Psoas muscle (tissue), 8 donors: ENCODE measurements at regions of chr11 and their contacts with region 1.

Region 1: DNA sequence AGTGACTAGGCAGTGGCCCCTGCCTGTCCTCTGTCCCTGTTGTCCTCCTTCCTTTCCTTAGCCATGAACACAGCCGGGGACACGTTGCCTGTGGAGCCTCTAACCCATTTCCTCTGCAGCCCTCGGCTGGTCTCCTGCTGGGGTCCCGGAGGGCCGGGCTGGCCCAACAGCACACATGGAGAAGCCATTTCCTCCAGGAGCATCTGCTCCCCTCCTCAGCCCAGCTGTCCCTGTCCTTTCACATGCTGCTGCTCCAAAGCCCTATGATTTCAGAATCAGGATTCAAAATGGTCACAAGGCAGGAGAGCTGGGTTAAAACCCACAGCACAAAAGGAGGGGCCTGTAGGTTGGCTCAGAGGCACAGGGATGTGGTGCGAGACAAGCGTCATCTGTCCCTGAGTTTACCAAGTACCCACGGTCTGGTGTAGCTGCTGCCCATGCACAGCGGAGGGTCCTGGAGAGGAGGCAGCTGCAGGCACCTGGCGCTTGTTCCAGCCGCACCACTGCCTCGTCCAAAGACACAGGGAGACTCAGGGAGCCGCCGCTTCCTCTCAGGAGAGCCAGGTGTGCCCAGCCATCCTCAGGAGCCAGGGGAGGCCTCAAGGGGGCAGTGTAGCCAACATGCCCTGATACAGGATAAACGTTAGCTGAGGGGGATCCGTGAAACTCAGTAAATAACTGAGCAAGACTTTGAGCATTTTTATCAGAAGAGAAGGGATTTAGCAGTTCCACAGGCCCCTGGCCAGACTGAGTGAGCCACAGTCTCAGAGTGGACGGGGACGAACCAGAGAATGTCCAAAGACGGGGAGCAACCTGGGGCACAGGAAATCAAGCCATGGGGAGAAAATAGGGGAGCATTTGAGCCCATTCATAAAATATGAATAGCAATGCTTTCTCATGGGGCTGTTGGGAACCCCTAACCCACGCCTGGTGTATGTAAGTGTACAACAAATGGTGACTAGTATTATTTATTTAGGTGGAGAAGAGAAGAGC is 3.9 kb upstream of the VSIG10L2 start:
- DNase-seq: peak; percentile 54 to 74
- ATAC-seq: peak; percentile 72 to 92 (median 78)
- H3K4me3 ChIP-seq: no peak overlapping the region
- H3K27ac ChIP-seq: no peak overlapping the region
- H3K4me1 ChIP-seq: no peaks in the 10 kb centered on the region
- H3K27me3 ChIP-seq: no peaks in the 10 kb centered on the region
- CTCF ChIP-seq: peak; percentile 67

Region 2: DNA sequence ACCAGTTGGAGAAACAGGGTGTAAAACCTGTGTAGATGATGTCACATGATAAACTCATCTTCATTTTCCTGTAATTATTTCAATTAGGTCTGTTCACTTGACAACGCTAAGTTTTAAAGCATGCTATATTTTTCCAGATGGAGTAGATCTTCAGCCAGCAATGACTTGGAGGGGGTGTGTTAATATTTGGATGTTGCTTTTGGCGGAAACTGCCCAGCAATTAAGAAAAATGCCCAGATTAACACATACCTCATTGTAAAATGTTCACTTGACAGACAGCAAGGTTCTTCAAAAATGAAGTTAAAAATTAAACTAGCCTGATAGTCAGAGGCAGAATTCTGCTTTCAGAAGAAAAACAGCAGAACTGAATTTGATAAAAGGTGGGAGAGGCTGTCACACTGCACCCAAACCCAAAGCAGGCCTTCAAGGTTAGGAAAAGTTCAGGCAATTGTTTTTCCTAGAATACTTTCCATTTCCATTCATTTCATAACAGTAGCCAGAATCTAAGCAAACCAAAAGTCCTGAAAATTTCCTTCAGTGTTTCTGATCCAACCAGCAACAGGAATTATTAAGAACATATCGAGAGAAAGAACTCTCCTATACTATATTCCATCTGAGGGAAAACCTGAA is 37.0 kb after region 1 on chr11:
- intact Hi-C with region 1: loop called in 1 of 2 experiments (anchors 1 kb)
- DNase-seq: no peak
- ATAC-seq: no peak
- H3K4me3 ChIP-seq: no peak overlapping the region
- H3K27ac ChIP-seq: no peak overlapping the region
- H3K4me1 ChIP-seq: no peaks in the 10 kb centered on the region
- H3K27me3 ChIP-seq: no peaks in the 10 kb centered on the region
- CTCF ChIP-seq: no peak

Region 3: DNA sequence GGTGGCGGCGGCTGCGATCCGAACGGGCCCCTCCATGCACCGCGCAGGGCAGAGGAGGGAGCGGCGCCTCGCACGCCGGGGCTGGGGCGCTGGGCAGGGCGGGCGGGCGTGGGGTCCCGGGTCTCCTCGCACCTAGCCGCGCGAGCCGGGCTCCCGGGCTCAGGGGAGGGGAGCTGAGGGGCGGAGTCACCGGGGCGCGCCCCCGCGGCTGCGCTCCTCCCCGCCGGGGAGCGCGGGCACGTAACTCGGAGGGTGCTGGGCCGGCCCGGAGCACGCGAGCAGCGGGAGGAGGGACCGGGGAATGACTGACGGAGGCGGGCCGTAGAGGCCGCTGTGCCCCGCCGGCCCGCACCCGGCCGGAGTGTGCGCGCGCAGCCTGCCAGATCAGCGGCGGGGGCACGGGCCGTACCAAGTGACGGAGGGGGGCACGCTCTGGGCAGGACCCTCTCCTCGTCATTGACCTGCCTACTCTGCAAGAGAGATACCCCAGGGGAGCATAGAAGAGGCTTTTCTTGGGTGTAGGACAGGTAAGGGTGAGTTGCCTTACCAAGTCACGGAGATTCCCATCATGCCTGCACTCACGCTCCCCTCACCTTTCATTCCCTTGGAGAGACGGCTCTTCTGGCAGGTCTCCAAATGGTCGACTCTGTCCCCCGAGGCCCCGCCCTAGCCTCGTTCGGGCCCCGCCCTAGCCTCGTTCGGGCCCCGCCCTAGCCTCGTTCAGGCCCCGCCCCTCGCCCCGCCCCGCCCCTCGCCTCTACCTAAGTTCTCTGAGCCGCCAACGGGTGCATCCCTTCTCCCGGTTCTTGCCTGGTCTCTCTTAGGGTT is 121.0 kb after region 1 on chr11 and contains the start of gene CDON:
- intact Hi-C with region 1: loop called in 1 of 2 experiments (anchors 10 kb)
- DNase-seq: peak; percentile 93 to 96
- ATAC-seq: peak; percentile 99
- H3K4me3 ChIP-seq: peak within 1 kb of the TSS; percentile 79
- H3K27ac ChIP-seq: peak within 1 kb of the TSS; percentile 80
- H3K4me1 ChIP-seq: peaks cover 12% of the 10 kb centered on the region
- H3K27me3 ChIP-seq: peaks cover 0 to 16% (median 0%) of the 10 kb centered on the region in 3 donors
- CTCF ChIP-seq: no peak
- total RNA-seq, gene CDON: 1.3 to 5.6 (median 1.5) TPM

Region 4: GRCh38 chr11:126115816-126116331 is 174.0 kb after region 1 on chr11:
- intact Hi-C with region 1: loop called in 1 of 2 experiments (anchors 10 kb)
- DNase-seq: peak; percentile 61 to 71
- ATAC-seq: peak; percentile 62 to 73 (median 68)
- H3K4me3 ChIP-seq: no peak overlapping the region
- H3K27ac ChIP-seq: peak overlapping the region; percentile 65
- H3K4me1 ChIP-seq: peaks cover 32% of the 10 kb centered on the region
- H3K27me3 ChIP-seq: peaks cover 0 to 1% (median 0%) of the 10 kb centered on the region in 3 donors
- CTCF ChIP-seq: peak; percentile 15

Region 5: GRCh38 chr11:126146433-126147192 is 204.7 kb after region 1 on chr11:
- intact Hi-C with region 1: no loop called
- DNase-seq: no peak
- ATAC-seq: no peak
- H3K4me3 ChIP-seq: no peak overlapping the region
- H3K27ac ChIP-seq: no peak overlapping the region
- H3K4me1 ChIP-seq: no peaks in the 10 kb centered on the region
- H3K27me3 ChIP-seq: no peaks in the 10 kb centered on the region
- CTCF ChIP-seq: no peak

Region 6: DNA sequence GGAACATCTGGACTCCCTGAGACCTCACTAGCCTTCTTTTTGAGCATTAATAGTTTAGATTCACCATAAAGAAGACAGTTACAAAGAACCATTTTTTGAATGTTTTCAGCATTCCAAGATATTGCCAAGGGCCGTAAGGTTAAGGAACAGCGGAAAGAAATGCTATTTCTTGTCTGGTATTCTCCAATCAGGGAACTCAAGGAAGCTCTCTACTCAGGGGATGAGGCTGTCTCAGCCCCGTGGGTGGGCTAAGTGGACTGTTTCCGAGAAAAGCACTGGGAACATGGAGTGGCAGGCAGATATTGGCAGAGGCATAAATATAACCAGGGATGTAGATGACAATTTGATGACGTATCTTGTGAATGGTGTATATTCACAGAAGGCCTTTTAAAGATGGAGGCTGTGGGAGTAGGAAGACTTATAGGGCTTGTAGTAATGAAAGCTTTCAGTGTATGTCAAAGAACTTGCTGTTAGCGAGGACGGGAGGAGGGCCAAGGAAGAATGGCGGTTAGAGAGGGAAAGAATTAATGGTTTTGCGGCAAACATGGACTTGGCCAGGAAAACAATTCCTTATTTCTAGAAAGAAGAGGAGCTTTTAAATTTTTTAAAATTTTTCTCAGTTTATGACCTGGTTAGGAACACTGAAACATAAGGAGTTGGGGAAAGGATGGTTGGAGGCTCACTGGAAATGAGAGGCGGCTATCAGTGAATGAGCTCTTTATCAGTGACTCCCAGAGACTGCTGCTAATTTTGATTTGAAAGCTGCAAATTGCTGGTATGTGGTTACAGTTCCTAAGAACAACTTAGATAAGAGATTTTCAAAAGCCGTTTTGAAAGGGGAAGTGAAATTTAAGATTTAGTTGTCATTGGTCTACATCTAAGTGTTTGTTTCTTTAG is 478.1 kb after region 1 on chr11:
- intact Hi-C with region 1: no loop called
- DNase-seq: no peak
- ATAC-seq: no peak
- H3K4me3 ChIP-seq: no peak overlapping the region
- H3K27ac ChIP-seq: no peak overlapping the region
- H3K4me1 ChIP-seq: no peaks in the 10 kb centered on the region
- H3K27me3 ChIP-seq: no peaks in the 10 kb centered on the region
- CTCF ChIP-seq: no peak